MCF 10A (cell line): ENCODE measurements at regions of chr15 and their contacts with region 1.

Region 1: DNA sequence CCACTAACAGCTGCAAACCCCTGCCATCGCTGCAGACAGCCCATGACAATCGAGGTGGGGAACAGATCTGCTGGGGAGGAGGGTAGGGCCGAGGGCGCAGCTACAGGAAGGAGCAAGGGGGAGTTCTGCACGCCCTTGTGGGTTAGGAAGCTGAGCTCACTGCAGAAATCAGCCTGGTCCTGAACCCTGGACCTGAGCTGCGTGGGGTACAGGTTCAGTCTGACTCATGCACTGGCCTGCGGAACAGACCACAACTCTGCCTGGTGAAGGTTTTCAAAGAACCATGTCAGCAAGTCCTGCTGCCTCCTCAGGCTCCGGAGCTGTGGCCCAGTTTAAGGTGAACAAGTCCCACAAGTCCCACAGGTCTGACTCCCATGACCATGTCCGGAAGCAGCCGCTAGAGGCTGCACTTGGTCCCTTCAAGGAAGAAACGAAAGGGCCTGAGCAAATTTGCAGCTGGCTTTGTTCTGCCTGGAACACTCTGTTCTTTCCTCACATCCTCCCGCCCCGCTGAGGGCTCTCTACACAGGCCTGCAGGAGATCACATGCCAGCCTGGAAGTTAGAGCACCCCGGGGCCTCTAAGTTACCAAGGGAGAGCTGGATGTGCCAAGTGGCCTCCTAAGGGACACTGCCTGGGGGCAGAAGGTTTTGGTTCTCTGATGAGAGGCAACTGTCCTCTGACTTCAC is 49.4 kb upstream of the AKAP13 start:
- DNase-seq: peak; percentile 96
- H3K4me3 Mint-ChIP-seq: peak overlapping the region; percentile 58
- H3K27ac Mint-ChIP-seq: peak overlapping the region; percentile 95
- H3K4me1 Mint-ChIP-seq: peaks cover 40% of the 10 kb centered on the region
- H3K27me3 Mint-ChIP-seq: no peaks in the 10 kb centered on the region
- CTCF ChIP-seq: peak; percentile 98

Region 2: GRCh38 chr15:85318048-85318731 is 12.9 kb before region 1 on chr15:
- CTCF ChIA-PET with region 1: interaction called, 48 read pairs
- POLR2A ChIA-PET with region 1: interaction called, 15 read pairs
- intact Hi-C with region 1: no loop called
- DNase-seq: peak; percentile 64
- H3K4me3 Mint-ChIP-seq: no peak overlapping the region
- H3K27ac Mint-ChIP-seq: no peak overlapping the region
- H3K4me1 Mint-ChIP-seq: peaks cover 21% of the 10 kb centered on the region
- H3K27me3 Mint-ChIP-seq: no peaks in the 10 kb centered on the region
- CTCF ChIP-seq: no peak

Region 3: DNA sequence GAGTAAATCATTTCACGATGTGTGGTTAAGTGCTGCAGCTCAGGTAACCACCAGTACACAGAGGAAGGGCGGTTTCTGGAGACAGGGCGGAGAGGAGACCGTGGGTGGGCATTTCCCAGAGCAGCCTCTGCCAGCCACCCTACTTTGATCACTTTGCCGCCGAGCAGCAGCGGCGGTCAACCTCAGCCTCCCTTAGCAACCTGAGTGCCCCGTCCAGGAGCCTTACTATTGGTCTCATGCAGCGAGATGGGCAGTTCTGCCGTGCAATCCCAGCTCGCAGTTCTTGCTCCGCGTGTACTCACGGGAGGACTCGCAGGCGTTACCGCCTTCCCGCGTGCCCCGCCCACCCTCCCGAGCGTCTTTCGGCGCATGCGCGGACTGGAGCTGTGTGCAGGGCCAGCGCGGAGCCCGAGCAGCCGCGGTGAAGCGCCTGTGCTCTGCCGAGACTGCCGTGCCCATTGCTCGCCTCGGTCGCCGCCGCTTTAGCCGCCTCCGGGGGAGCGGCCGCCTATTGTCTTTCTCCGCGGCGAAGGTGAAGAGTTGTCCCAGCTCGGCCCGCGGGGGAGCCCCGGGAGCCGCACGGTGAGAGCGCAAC is 49.3 kb after region 1 on chr15 and contains the start of gene AKAP13:
- CTCF ChIA-PET with region 1: interaction called, 20 read pairs
- POLR2A ChIA-PET with region 1: interaction called, 50 read pairs
- intact Hi-C with region 1: loop called (anchors 1 kb)
- DNase-seq: peak; percentile 99
- H3K4me3 Mint-ChIP-seq: peak within 1 kb of the TSS; percentile 79
- H3K27ac Mint-ChIP-seq: peak within 1 kb of the TSS; percentile 79
- H3K4me1 Mint-ChIP-seq: peaks cover 35% of the 10 kb centered on the region
- H3K27me3 Mint-ChIP-seq: no peaks in the 10 kb centered on the region
- CTCF ChIP-seq: no peak
- total RNA-seq, gene AKAP13: 65.7 and 92.9 TPM in 2 replicates

Region 4: DNA sequence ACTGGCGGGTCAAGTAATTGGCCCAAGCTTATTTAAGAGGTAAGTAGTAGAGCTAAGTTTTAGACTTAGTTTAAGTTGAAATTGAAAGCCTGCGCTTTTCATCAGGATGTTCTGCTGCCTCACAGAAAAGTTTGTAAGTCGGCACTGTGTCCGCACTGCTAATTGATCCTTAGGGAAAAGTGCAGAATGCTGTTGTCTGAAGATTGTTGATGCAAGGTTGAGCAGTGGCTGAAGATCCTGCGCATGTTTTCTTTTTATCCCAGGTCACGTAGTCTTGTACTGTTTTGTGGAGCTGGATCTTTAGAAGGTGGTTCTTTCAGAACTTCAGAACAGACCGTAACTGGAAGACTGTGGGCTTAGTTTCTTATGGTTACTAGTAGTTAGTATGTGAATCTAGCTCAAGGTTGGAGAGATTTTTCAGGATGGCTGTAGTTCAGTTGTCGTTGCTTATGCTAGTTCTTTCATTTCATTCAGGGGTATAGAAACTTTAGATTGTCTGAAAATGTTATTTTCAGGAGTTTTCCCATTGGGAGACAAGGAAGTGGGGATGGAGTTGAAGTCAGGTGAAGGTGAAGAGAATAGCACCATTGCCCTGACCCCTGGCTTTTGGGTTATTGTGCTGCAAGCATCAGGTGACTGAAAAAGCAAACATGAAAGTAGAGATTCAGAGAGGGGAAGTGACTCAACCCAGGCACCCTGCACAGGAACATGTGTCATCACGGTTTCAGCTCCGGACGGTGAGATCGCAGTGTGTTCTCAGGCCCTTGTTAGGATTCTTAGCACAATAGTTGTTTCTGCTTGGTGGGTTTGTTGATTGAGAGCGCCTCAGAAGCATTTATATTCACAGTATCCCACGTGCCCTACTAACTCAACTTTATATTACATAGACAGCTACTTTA is 82.2 kb after region 1 on chr15:
- CTCF ChIA-PET with region 1: interaction called, 134 read pairs
- POLR2A ChIA-PET with region 1: interaction called, 46 read pairs
- intact Hi-C with region 1: loop called (anchors 1 kb)
- DNase-seq: peak; percentile 97
- H3K4me3 Mint-ChIP-seq: peak overlapping the region; percentile 60
- H3K27ac Mint-ChIP-seq: peak overlapping the region; percentile 94
- H3K4me1 Mint-ChIP-seq: peaks cover 57% of the 10 kb centered on the region
- H3K27me3 Mint-ChIP-seq: no peaks in the 10 kb centered on the region
- CTCF ChIP-seq: no peak

Region 5: DNA sequence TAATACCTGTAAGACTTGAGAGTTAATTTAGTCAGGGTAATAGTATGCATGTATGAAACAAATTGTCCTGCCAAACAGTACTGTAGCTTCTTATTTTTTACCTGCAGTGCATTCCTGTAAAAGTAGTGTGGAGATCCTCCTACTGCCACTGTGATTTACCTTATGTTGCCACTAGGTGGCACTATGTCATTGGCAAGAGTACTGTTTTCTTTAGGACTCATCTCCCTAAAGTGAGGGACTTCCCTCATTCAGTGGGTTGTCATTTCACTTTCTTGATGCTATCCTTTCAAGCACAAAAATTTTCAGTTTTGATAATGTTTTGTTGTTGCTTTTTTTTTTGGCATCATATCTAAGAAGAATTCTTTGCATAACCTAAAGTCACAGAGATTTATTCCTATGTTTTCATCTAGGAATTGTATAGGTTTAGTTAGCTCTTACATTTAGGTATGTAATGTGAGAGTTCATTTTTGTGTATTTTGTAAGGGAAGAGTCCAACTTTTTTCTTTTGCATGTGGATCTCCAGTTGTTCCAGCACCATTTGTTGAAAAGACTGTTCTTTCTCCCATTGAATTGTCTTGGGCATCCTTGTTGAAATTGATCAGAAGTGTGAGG is 155.0 kb after region 1 on chr15:
- CTCF ChIA-PET with region 1: interaction called, 13 read pairs
- POLR2A ChIA-PET with region 1: interaction called, 4 read pairs
- intact Hi-C with region 1: loop called (anchors 5 kb)
- DNase-seq: peak; percentile 83
- H3K4me3 Mint-ChIP-seq: no peak overlapping the region
- H3K27ac Mint-ChIP-seq: no peak overlapping the region
- H3K4me1 Mint-ChIP-seq: peaks cover 37% of the 10 kb centered on the region
- H3K27me3 Mint-ChIP-seq: no peaks in the 10 kb centered on the region
- CTCF ChIP-seq: peak; percentile 62